Activated CD4-positive, alpha-beta T cell treated with anti-CD3 and anti-CD28 coated beads for 36 hours (primary cell): ENCODE measurements at regions of chr9 and their contacts with region 1.

Region 1: DNA sequence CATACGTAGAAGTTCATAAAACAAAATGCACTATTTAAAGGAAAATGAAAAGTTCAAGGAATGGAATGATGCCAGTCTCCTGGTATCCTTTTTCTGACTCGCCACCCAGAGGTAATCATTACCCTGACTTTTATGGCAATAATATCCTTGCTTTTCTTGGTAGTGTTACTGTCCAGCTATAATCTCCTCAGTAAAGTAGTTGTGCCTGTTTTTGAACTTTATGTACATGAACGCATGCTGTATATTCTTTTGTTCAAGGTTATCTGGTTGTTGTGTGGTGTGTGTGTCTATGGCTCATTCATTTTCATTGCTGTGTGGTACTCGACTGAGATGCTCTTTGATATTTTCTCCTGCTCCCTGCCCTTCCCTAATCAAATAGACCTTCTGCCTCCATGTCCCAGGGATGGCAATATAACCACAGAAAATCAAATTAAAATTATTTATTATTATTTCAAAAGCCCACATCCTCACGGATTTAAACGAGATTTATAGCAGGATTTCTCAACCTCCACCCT is 29.2 kb upstream of the FBP1 start:
- DNase-seq: no peak
- ATAC-seq: no peak
- H3K4me3 Mint-ChIP-seq: peak overlapping the region; percentile 71
- H3K27ac Mint-ChIP-seq: no peak overlapping the region
- H3K4me1 Mint-ChIP-seq: peaks cover 11% of the 10 kb centered on the region
- H3K27me3 Mint-ChIP-seq: peaks cover 4% of the 10 kb centered on the region

Region 2: GRCh38 chr9:94656200-94656599 is 12.3 kb before region 1 on chr9:
- CTCF ChIA-PET with region 1: interaction called, 23 read pairs
- POLR2A ChIA-PET with region 1: interaction called, 4 read pairs
- intact Hi-C with region 1: no loop called
- DNase-seq: peak; percentile 72
- ATAC-seq: peak; percentile 100
- H3K4me3 Mint-ChIP-seq: peak overlapping the region; percentile 63
- H3K27ac Mint-ChIP-seq: peak overlapping the region; percentile 70
- H3K4me1 Mint-ChIP-seq: peaks cover 18% of the 10 kb centered on the region
- H3K27me3 Mint-ChIP-seq: peaks cover 4% of the 10 kb centered on the region

Region 3: DNA sequence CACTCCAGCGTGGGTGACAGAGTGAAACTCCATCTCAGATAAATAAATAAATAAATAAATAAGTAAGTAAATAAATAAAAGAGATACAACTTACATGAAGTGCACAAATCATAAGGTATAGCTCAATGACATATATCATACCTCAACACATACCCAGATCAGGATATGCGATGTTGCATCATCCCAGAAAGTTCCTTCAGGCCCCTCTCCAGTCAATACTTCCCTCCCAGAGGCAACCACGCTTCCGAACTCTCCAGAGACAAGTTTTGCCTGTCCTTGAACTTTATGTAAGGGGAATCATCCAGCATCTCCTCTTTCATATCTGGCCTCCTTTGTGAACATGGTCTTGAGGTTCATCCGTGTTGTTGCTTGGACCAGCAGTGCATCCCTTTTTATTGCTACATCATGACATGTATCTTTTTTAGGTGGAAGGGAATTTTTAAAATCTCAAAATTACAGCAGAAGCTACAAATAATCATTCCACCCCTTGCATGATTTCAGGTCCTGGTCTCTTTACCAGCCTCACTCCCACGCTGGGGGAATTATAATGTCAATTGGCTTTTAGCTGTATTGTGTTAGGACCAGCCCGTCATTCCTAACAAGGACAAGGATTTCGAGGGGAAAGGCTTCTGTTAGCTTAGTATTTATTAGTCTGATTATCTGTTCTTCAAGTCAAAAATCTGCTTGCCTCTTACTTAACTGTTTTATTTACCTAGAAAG is 25.2 kb after region 1 on chr9:
- CTCF ChIA-PET with region 1: no interaction called
- POLR2A ChIA-PET with region 1: no interaction called
- intact Hi-C with region 1: no loop called
- DNase-seq: no peak
- ATAC-seq: no peak
- H3K4me3 Mint-ChIP-seq: no peak overlapping the region
- H3K27ac Mint-ChIP-seq: no peak overlapping the region
- H3K4me1 Mint-ChIP-seq: no peaks in the 10 kb centered on the region
- H3K27me3 Mint-ChIP-seq: peaks cover 2% of the 10 kb centered on the region

Region 4: DNA sequence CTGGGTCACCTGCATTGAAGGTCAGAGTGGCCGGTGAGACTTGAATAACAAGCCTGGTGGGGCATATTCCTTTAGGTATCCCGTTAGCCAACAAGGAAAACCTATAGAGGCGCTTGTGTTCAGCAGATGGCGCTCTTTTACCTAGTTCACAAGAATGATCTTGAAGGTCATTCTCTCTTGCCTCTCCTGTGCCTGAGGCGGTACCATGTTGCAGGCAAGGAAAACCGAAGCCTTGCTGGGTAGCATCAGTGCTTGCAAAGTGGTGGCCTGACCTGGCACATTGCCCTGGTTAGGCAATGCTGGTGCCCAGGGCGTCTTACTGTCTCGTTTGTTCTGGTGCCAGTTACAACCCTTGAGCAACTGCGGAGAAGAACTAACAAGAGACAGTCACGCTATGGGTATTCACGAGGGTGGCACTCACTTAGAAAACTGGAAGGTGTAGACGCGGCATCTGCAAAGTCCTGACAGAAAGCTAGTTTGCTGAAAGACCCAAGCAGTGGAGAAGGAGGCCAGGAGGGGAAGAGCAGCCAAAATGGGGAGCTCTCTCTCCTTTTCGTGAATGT is 114.7 kb after region 1 on chr9:
- CTCF ChIA-PET with region 1: no interaction called
- POLR2A ChIA-PET with region 1: no interaction called
- intact Hi-C with region 1: no loop called
- DNase-seq: peak; percentile 58
- ATAC-seq: peak; percentile 31
- H3K4me3 Mint-ChIP-seq: no peak overlapping the region
- H3K27ac Mint-ChIP-seq: no peak overlapping the region
- H3K4me1 Mint-ChIP-seq: peaks cover 14% of the 10 kb centered on the region
- H3K27me3 Mint-ChIP-seq: no peaks in the 10 kb centered on the region